Activated CD4-positive, alpha-beta T cell treated with anti-CD3 and anti-CD28 coated beads for 36 hours (primary cell): ENCODE measurements at regions of chr3 and their contacts with region 1.

Region 1: GRCh38 chr3:145869958-145870357 is 291.0 kb downstream of the PLOD2 start:
- DNase-seq: no peak
- ATAC-seq: no peak
- H3K4me3 Mint-ChIP-seq: no peak overlapping the region
- H3K27ac Mint-ChIP-seq: no peak overlapping the region
- H3K4me1 Mint-ChIP-seq: no peaks in the 10 kb centered on the region
- H3K27me3 Mint-ChIP-seq: no peaks in the 10 kb centered on the region

Region 2: GRCh38 chr3:145272684-145273083 is 597.3 kb before region 1 on chr3:
- CTCF ChIA-PET with region 1: no interaction called
- POLR2A ChIA-PET with region 1: no interaction called
- intact Hi-C with region 1: no loop called
- DNase-seq: no peak
- ATAC-seq: no peak
- H3K4me3 Mint-ChIP-seq: no peak overlapping the region
- H3K27ac Mint-ChIP-seq: no peak overlapping the region
- H3K4me1 Mint-ChIP-seq: no peaks in the 10 kb centered on the region
- H3K27me3 Mint-ChIP-seq: no peaks in the 10 kb centered on the region

Region 3: DNA sequence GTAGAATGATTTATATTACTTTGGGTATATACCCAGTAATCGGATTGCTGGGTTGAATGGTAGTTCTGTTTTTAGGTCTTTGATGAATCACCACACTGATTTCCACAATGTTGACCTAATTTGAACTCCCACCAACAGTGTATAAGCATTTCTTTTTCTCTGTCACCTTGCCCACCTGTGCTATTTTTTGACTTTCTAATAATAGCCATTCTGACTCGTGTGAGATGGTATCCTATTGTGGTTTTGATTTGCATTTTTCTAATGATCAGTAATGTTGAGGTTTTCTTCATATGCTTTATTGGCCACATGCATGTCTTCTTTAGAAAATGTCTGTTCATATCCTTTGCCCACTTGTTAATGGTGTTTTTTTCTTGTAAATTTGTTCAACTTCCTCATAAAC is 49.8 kb before region 1 on chr3:
- CTCF ChIA-PET with region 1: no interaction called
- POLR2A ChIA-PET with region 1: no interaction called
- intact Hi-C with region 1: loop called in 1 of 2 experiments (anchors 5 kb)
- DNase-seq: no peak
- ATAC-seq: no peak
- H3K4me3 Mint-ChIP-seq: no peak overlapping the region
- H3K27ac Mint-ChIP-seq: no peak overlapping the region
- H3K4me1 Mint-ChIP-seq: no peaks in the 10 kb centered on the region
- H3K27me3 Mint-ChIP-seq: no peaks in the 10 kb centered on the region